ENCODE measurements at regions of chr2 and their contacts with region 1.

Region 1: GRCh38 chr2:202104278-202104870 is 31.3 kb downstream of the KIAA2012 start:
- DNase-seq: peak in 6 of 35 experiments; percentile 0 to 17 (median 7)
- ATAC-seq: no peak
- H3K4me3 ChIP-seq: no peak overlapping the region
- H3K4me3 Mint-ChIP-seq: no peak overlapping the region
- H3K27ac ChIP-seq: no peak overlapping the region
- H3K27ac Mint-ChIP-seq: no peak overlapping the region
- H3K4me1 ChIP-seq: no peaks in the 10 kb centered on the region
- H3K4me1 Mint-ChIP-seq: peaks cover 0 to 6% (median 0%) of the 10 kb centered on the region in 3 donors
- H3K27me3 ChIP-seq: peaks cover 0 to 7% of the 10 kb centered on the region in 2 experiments
- H3K27me3 Mint-ChIP-seq: peaks cover 4 to 13% of the 10 kb centered on the region in 2 donors

Region 2: GRCh38 chr2:201882353-201883090 is 221.9 kb before region 1 on chr2:
- CTCF ChIA-PET with region 1: no interaction called
- POLR2A ChIA-PET with region 1: interaction called in 1 of 2 experiments, 11 read pairs
- DNase-seq: peak in 5 of 35 experiments; percentile 6 to 13 (median 8)
- ATAC-seq: no peak
- H3K4me3 ChIP-seq: peak overlapping the region in 1 of 2 donors; percentile 46
- H3K4me3 Mint-ChIP-seq: peak overlapping the region; percentile 37 to 73 (median 50)
- H3K27ac ChIP-seq: no peak overlapping the region
- H3K27ac Mint-ChIP-seq: no peak overlapping the region
- H3K4me1 ChIP-seq: peaks cover 4 to 6% of the 10 kb centered on the region in 2 experiments
- H3K4me1 Mint-ChIP-seq: peaks cover 12 to 21% (median 17%) of the 10 kb centered on the region in 3 donors
- H3K27me3 ChIP-seq: peaks cover 0 to 23% of the 10 kb centered on the region in 2 experiments
- H3K27me3 Mint-ChIP-seq: peaks cover 45 to 50% of the 10 kb centered on the region in 2 donors